ENCODE measurements at regions of chr18 and their contacts with region 1.

Region 1: DNA sequence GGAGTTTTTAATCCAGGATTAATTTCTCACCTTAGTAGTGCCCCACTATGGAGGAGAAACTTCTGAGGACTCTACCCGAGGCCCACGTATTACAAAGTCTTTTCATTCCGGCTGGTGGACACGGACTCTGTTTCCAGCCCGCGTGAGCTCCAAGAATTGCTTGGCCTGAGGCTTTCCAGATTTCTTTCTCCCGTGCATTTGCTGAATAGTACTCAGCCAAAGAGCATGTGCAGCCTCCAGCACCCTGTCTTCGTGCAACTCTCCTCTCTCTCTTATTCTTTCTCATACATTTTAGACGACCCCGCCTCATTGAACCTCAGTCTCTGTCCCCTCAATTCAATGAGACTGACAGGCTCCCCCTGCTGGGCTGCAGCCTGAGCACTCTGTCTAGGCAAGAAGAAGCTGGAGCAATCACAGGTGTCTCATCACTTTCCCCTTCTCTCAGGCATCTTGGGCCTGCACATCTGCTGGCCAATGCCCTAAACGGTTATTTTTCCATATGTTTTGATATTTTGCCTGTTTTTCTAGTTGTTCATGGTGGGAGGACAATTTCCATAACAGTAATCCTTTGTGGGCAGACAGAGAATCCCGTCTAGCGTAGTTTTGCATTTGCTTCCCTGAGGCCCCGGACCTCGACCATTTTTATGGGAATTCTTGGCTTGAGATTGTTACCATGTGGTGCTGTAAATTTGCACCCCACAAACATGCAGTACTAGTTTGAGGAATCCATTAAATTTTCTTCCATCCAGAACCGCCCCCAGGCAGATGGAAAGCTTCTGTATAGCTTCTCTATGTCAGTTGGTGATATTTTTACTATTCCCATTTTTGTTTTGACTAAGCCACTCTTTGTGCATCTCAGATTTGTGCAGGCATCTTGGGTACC is 50.1 kb upstream of the LPIN2 start:
- DNase-seq: no peak
- ATAC-seq: peak; percentile 79
- H3K4me3 ChIP-seq: no peak overlapping the region
- H3K27ac ChIP-seq: no peak overlapping the region
- H3K4me1 ChIP-seq: peaks cover 32% of the 10 kb centered on the region
- H3K27me3 ChIP-seq: no peaks in the 10 kb centered on the region
- CTCF ChIP-seq: peak; percentile 77 to 87 (median 82)
- EP300 ChIP-seq: no peak
- POLR2A ChIP-seq: no peak
- RAD21 ChIP-seq: peak; percentile 77

Region 2: DNA sequence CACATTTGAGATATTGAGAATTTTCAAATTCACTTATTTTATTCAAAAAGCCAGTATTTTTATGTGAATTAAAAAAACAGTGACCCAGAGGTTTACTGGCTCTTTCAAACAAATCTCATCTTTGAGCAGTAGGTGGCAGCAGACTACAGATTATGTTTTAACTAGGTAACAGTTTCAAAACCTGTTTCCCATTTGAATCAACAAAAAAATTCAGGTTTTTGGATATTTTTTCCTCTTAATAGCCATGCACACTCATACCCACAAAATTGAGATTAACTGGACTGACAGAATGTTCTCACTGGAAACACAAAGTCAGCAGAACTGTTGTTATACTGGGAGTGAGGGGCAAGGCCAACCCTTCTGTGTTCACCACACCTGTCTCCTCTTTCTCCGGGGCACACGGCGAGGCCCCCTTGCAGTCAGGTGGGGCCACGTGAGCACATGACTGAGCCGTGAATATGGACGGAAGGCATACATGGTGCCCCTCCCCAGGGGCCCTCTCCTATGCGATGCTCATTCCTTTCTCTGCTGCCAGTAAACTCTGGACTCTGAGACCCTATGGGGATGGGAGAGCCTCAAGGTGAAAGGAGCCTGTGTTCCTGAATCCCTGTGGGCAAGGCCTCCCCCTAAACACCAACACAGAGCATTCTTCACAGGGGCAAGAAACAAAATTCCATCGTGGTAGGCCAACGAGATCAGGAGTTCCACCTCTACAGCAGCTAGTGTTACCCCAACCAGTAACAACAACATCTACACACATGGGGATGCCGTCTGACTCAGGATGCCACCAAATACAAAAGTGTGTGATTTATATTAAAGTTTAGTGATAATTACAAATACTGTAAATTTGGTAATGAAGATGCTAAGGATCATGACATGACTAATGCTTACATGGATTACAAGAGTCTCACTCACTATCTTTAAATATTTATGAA is 130.5 kb before region 1 on chr18:
- CTCF ChIA-PET with region 1: interaction called, 54 read pairs
- POLR2A ChIA-PET with region 1: no interaction called
- RAD21 ChIA-PET with region 1: interaction called, 22 read pairs
- SMC1A ChIA-PET with region 1: interaction called, 24 read pairs
- in situ Hi-C with region 1: loop called (anchors 5 kb)
- intact Hi-C with region 1: loop called (anchors 1 kb)
- DNase-seq: peak; percentile 23
- ATAC-seq: peak; percentile 76
- H3K4me3 ChIP-seq: no peak overlapping the region
- H3K27ac ChIP-seq: no peak overlapping the region
- H3K4me1 ChIP-seq: no peaks in the 10 kb centered on the region
- H3K27me3 ChIP-seq: no peaks in the 10 kb centered on the region
- CTCF ChIP-seq: peak; percentile 40 to 71 (median 59); a peak in 5 of 6 replicates
- EP300 ChIP-seq: no peak
- POLR2A ChIP-seq: no peak
- RAD21 ChIP-seq: peak; percentile 94

Region 3: DNA sequence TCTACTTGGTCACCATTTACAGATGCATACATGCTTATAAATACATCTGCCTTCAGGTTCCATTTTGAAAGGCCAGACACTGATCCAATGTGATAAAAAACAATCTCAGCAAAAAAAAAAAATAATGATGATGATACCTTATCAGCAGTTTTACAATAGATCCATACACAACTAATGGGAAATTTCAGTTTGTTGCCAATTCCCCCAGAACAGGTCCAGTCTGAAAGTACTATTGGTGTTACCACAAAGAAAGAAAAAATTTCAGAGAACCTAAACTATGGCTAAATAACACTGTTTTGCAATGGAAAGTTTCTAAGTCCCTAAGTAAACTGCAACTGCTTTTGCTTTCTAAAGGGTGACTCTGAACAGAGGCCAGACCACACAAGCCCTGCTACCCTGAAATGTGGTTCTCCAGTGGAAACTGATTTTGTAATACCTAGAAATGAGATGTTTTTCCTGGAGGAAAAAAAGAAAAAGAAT is 104.2 kb before region 1 on chr18:
- CTCF ChIA-PET with region 1: interaction called, 10 read pairs
- POLR2A ChIA-PET with region 1: no interaction called
- RAD21 ChIA-PET with region 1: interaction called, 3 read pairs
- SMC1A ChIA-PET with region 1: interaction called, 7 read pairs
- in situ Hi-C with region 1: no loop called
- intact Hi-C with region 1: no loop called
- DNase-seq: no peak
- ATAC-seq: peak; percentile 65
- H3K4me3 ChIP-seq: peak overlapping the region; percentile 20; the same call in 1 of the 2 replicates
- H3K27ac ChIP-seq: peak overlapping the region; percentile 93
- H3K4me1 ChIP-seq: peaks cover 70% of the 10 kb centered on the region
- H3K27me3 ChIP-seq: no peaks in the 10 kb centered on the region
- CTCF ChIP-seq: no peak
- EP300 ChIP-seq: 0 out of 4 replicates have a peak, but pooled peaks have one; percentile 6 to 11
- POLR2A ChIP-seq: no peak
- RAD21 ChIP-seq: no peak

Region 4: DNA sequence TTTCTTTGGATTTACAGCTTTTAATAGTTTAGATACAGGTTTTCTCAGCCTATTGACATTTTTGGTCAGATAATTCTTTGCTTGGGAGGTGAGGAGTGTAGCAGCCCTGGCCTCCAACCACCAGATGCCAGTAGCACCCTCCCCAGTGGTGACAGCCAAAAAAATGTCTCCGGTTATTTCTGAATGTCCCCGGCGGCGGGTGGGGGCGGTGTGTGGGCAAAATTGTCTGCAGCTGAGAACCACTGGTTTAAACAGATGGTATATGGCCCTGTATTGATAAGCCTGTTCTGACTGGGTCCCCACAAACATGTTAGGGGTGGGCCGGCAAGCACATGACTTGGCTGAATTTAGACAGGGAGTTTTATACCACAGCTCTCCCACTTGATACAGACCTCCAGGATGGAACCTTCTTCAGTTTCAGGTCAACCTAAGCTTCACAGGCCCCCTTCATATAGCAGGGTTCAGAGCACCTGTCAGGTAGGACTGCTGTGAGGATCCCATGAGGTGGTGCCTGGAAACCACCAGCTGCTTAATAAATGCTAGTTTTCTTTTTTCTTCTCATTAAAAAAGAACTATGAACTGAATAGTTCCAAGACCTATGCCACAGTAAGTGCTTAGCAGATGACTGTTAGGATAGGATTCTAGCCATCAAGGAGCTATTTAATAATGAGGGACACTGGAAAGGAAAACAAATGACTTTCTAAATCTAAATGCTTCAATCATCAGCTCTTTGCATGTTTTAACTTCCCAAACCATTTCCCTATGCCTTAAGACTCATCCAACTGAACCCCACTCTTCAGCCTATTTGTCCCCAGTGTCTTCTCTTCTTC is 68.2 kb before region 1 on chr18:
- CTCF ChIA-PET with region 1: interaction called, 131 read pairs
- POLR2A ChIA-PET with region 1: no interaction called
- RAD21 ChIA-PET with region 1: interaction called, 45 read pairs
- SMC1A ChIA-PET with region 1: interaction called, 78 read pairs
- in situ Hi-C with region 1: no loop called
- intact Hi-C with region 1: loop called (anchors 5 kb)
- DNase-seq: no peak
- ATAC-seq: peak; percentile 93
- H3K4me3 ChIP-seq: no peak overlapping the region
- H3K27ac ChIP-seq: peak overlapping the region; percentile 53; the same call in 1 of the 2 replicates
- H3K4me1 ChIP-seq: peaks cover 33% of the 10 kb centered on the region
- H3K27me3 ChIP-seq: no peaks in the 10 kb centered on the region
- CTCF ChIP-seq: peak; percentile 69 to 71 (median 70)
- EP300 ChIP-seq: no peak
- POLR2A ChIP-seq: no peak
- RAD21 ChIP-seq: peak; percentile 84

Region 5: GRCh38 chr18:3037423-3037915 is 25.6 kb before region 1 on chr18:
- CTCF ChIA-PET with region 1: interaction called, 21 read pairs
- POLR2A ChIA-PET with region 1: no interaction called
- RAD21 ChIA-PET with region 1: interaction called, 4 read pairs
- SMC1A ChIA-PET with region 1: interaction called, 10 read pairs
- in situ Hi-C with region 1: no loop called
- intact Hi-C with region 1: no loop called
- DNase-seq: peak; percentile 77
- ATAC-seq: peak; percentile 99
- H3K4me3 ChIP-seq: no peak overlapping the region
- H3K27ac ChIP-seq: peak overlapping the region; percentile 33
- H3K4me1 ChIP-seq: peaks cover 12% of the 10 kb centered on the region
- H3K27me3 ChIP-seq: no peaks in the 10 kb centered on the region
- CTCF ChIP-seq: no peak
- EP300 ChIP-seq: peak in 1 of 2 experiments; percentile 35; a peak in 1 of 4 replicates
- POLR2A ChIP-seq: peak; percentile 33; the same call in 1 of the 2 replicates
- RAD21 ChIP-seq: no peak

Region 6: DNA sequence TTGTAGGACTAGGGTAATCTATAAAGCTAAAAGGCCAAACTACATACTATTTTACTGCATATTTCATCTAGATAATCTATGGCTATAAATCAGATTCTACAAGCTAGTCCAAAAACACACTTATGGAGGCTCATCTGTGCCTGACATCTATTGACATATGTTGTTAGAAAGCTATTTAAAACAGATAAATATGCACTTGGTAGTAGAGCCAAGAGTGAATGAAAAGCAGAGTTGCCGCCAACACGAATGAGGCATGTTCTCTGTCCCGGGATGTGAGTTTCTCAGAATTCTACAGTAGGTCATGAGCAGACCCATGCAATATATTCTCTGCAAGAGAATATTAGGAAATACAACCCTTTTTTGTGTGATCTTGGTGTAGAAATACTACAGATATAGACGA is 16.6 kb after region 1 on chr18:
- CTCF ChIA-PET with region 1: interaction called, 27 read pairs
- POLR2A ChIA-PET with region 1: no interaction called
- RAD21 ChIA-PET with region 1: interaction called, 4 read pairs
- SMC1A ChIA-PET with region 1: interaction called, 4 read pairs
- in situ Hi-C with region 1: no loop called
- intact Hi-C with region 1: no loop called
- DNase-seq: no peak
- ATAC-seq: no peak
- H3K4me3 ChIP-seq: no peak overlapping the region
- H3K27ac ChIP-seq: no peak overlapping the region
- H3K4me1 ChIP-seq: no peaks in the 10 kb centered on the region
- H3K27me3 ChIP-seq: no peaks in the 10 kb centered on the region
- CTCF ChIP-seq: no peak
- EP300 ChIP-seq: no peak
- POLR2A ChIP-seq: no peak
- RAD21 ChIP-seq: no peak

Region 7: GRCh38 chr18:3340015-3340681 is 277.1 kb after region 1 on chr18:
- CTCF ChIA-PET with region 1: no interaction called
- POLR2A ChIA-PET with region 1: no interaction called
- RAD21 ChIA-PET with region 1: no interaction called
- SMC1A ChIA-PET with region 1: no interaction called
- in situ Hi-C with region 1: no loop called
- intact Hi-C with region 1: no loop called
- DNase-seq: no peak
- ATAC-seq: no peak
- H3K4me3 ChIP-seq: no peak overlapping the region
- H3K27ac ChIP-seq: no peak overlapping the region
- H3K4me1 ChIP-seq: no peaks in the 10 kb centered on the region
- H3K27me3 ChIP-seq: no peaks in the 10 kb centered on the region; a peak in 2 of 4 replicates
- CTCF ChIP-seq: no peak
- EP300 ChIP-seq: no peak
- POLR2A ChIP-seq: no peak
- RAD21 ChIP-seq: no peak